ENCODE measurements at regions of chr22 and their contacts with region 1.

Region 1: GRCh38 chr22:41157083-41157482 is 48.0 kb upstream of the L3MBTL2 start:
- DNase-seq: no peak
- ATAC-seq: no peak
- H3K4me3 ChIP-seq: no peak overlapping the region
- H3K27ac ChIP-seq: no peak overlapping the region
- H3K4me1 ChIP-seq: no peaks in the 10 kb centered on the region
- H3K27me3 ChIP-seq: no peaks in the 10 kb centered on the region
- CTCF ChIP-seq: no peak

Region 2: GRCh38 chr22:40818747-40819598 is 338.1 kb before region 1 on chr22 and contains the start of gene SLC25A17:
- intact Hi-C with region 1: no loop called
- DNase-seq: peak; percentile 89 to 94
- ATAC-seq: peak; percentile 93 to 97 (median 96)
- H3K4me3 ChIP-seq: peak within 1 kb of the TSS; percentile 98
- H3K27ac ChIP-seq: peak within 1 kb of the TSS; percentile 90
- H3K4me1 ChIP-seq: peaks cover 33% of the 10 kb centered on the region
- H3K27me3 ChIP-seq: no peaks in the 10 kb centered on the region
- CTCF ChIP-seq: peak; percentile 31
- total RNA-seq, gene SLC25A17: 2.7 to 6.2 (median 3.7) TPM

Region 3: DNA sequence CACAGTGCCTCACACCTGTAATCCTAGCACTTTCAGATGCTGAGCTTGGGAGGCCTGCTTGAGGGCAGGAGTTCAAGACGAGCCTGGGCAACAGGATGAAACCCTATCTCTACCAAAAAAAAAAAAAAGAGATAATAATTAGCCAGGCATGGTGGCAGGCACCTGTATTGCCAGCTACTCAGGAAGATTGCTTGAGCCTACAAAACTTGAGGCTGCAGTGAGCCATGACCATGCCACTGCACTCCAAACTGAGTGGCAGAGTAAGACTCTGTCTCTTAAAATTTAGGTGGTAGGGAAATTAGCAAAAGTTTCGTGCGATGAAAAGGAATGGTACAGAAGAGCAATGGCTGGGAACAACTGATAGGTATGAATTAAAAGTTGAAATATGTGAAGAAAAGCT is 318.6 kb before region 1 on chr22:
- intact Hi-C with region 1: loop called in 1 of 2 experiments (anchors 10 kb)
- DNase-seq: no peak
- ATAC-seq: peak in 2 of 4 donors; percentile 39 to 49
- H3K4me3 ChIP-seq: no peak overlapping the region
- H3K27ac ChIP-seq: peak overlapping the region; percentile 21
- H3K4me1 ChIP-seq: peaks cover 29% of the 10 kb centered on the region
- H3K27me3 ChIP-seq: no peaks in the 10 kb centered on the region
- CTCF ChIP-seq: no peak

Region 4: GRCh38 chr22:41642331-41643110 is 485.4 kb after region 1 on chr22:
- intact Hi-C with region 1: loop called in 1 of 2 experiments (anchors 10 kb)
- DNase-seq: no peak
- ATAC-seq: no peak
- H3K4me3 ChIP-seq: no peak overlapping the region
- H3K27ac ChIP-seq: no peak overlapping the region
- H3K4me1 ChIP-seq: no peaks in the 10 kb centered on the region
- H3K27me3 ChIP-seq: no peaks in the 10 kb centered on the region
- CTCF ChIP-seq: no peak

Measured in psoas muscle (tissue), 8 donors.